CD8-positive, alpha-beta T cell (primary cell): ENCODE measurements at regions of chr20 and their contacts with region 1.

Region 1: DNA sequence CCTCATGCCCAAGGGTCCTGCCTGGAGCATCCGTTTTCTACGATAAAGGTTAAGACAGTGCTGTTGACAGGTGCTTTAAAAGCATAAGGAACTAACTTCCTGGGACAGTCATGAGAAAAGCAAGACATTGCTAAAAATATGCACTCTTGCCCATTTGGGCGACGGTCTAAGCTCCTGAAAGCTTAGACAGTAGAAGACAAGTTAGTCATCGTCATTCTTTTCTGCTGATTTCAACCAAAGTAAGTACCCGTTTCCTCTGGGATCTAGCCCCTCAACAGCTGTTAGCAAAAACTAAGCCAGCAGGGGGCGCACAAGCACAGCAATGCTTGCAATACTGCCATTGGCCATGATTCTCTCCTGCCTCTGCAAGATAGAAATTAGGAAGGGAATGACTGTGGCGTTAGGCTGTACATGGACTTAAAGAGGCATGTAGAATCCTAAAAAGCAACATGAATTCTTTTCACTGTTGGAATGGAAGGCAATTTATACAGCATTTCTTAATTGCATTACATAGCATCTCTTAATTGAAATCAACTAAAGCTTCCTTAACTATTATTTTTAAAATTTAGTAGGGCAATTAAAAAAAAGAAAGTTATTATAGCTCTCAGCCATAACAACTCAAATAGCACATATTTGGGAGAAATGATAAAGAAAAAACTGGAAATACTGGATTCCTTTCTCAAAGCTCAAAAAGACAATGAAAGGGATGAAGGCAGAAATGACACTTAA is 147.8 kb upstream of the RALGAPA2 start:
- DNase-seq: peak; percentile 64 to 90 (median 77)
- ATAC-seq: peak; percentile 58
- H3K4me3 ChIP-seq: no peak overlapping the region
- H3K4me3 Mint-ChIP-seq: no peak overlapping the region
- H3K27ac ChIP-seq: no peak overlapping the region
- H3K27ac Mint-ChIP-seq: no peak overlapping the region
- H3K4me1 ChIP-seq: no peaks in the 10 kb centered on the region
- H3K4me1 Mint-ChIP-seq: no peaks in the 10 kb centered on the region
- H3K27me3 ChIP-seq: peaks cover 0 to 3% of the 10 kb centered on the region in 2 experiments
- H3K27me3 Mint-ChIP-seq: peaks cover 22% of the 10 kb centered on the region
- CTCF ChIP-seq: peak; percentile 82

Region 2: DNA sequence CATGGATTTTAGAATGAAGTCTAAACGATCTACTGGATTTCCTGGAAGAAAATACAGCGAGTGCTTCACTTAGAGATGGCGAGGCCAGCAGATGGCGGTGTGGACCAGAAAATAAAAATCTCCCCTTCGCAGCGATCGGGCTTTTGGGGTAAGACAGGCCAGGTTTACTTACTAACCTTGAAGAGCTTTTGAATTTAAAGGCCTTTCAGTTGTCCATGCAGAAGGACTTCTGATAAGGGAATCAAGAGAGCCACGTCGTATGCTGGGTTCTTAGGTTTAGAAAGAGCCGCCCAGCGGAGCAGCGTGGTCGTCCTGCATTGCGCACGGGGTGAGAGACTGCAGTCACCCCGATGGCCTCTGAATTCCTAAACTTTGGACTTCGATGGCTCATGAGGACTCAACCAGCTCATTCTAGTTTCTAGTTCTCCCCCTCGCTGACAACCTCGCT is 22.6 kb before region 1 on chr20:
- CTCF ChIA-PET with region 1: interaction called, 17 read pairs
- POLR2A ChIA-PET with region 1: no interaction called
- intact Hi-C with region 1: no loop called
- DNase-seq: peak in 4 of 9 experiments; percentile 17 to 28 (median 19)
- ATAC-seq: no peak
- H3K4me3 ChIP-seq: no peak overlapping the region
- H3K4me3 Mint-ChIP-seq: no peak overlapping the region
- H3K27ac ChIP-seq: no peak overlapping the region
- H3K27ac Mint-ChIP-seq: no peak overlapping the region
- H3K4me1 ChIP-seq: no peaks in the 10 kb centered on the region
- H3K4me1 Mint-ChIP-seq: peaks cover 3% of the 10 kb centered on the region
- H3K27me3 ChIP-seq: no peaks in the 10 kb centered on the region
- H3K27me3 Mint-ChIP-seq: peaks cover 16% of the 10 kb centered on the region
- CTCF ChIP-seq: peak; percentile 31

Region 3: DNA sequence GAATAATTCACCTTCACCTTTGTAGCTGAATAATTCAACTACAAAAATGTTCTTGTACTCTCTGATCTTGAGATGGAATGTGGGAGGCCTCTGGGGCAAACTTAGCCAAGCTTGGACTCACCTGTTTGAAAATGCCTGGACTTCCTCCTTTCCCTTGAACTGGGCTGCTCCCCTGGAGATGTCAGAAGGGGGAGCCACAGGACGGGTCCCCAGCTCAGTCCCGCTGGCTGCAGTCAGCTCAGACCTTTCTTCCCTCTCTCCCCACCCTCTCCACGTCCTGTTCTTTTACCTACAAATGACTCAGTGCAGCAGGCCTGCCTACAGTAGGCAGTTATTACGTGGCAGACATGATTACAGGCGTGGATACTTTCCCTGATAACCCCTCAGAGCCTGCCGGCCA is 16.3 kb before region 1 on chr20:
- CTCF ChIA-PET with region 1: interaction called, 17 read pairs
- POLR2A ChIA-PET with region 1: no interaction called
- intact Hi-C with region 1: no loop called
- DNase-seq: no peak
- ATAC-seq: no peak
- H3K4me3 ChIP-seq: no peak overlapping the region
- H3K4me3 Mint-ChIP-seq: no peak overlapping the region
- H3K27ac ChIP-seq: no peak overlapping the region
- H3K27ac Mint-ChIP-seq: no peak overlapping the region
- H3K4me1 ChIP-seq: no peaks in the 10 kb centered on the region
- H3K4me1 Mint-ChIP-seq: no peaks in the 10 kb centered on the region
- H3K27me3 ChIP-seq: no peaks in the 10 kb centered on the region
- H3K27me3 Mint-ChIP-seq: peaks cover 7% of the 10 kb centered on the region
- CTCF ChIP-seq: no peak

Region 4: GRCh38 chr20:20849161-20849560 is 11.1 kb before region 1 on chr20:
- CTCF ChIA-PET with region 1: interaction called, 17 read pairs
- POLR2A ChIA-PET with region 1: no interaction called
- intact Hi-C with region 1: no loop called
- DNase-seq: no peak
- ATAC-seq: no peak
- H3K4me3 ChIP-seq: no peak overlapping the region
- H3K4me3 Mint-ChIP-seq: no peak overlapping the region
- H3K27ac ChIP-seq: no peak overlapping the region
- H3K27ac Mint-ChIP-seq: no peak overlapping the region
- H3K4me1 ChIP-seq: no peaks in the 10 kb centered on the region
- H3K4me1 Mint-ChIP-seq: no peaks in the 10 kb centered on the region
- H3K27me3 ChIP-seq: no peaks in the 10 kb centered on the region
- H3K27me3 Mint-ChIP-seq: peaks cover 9% of the 10 kb centered on the region
- CTCF ChIP-seq: no peak

Region 5: DNA sequence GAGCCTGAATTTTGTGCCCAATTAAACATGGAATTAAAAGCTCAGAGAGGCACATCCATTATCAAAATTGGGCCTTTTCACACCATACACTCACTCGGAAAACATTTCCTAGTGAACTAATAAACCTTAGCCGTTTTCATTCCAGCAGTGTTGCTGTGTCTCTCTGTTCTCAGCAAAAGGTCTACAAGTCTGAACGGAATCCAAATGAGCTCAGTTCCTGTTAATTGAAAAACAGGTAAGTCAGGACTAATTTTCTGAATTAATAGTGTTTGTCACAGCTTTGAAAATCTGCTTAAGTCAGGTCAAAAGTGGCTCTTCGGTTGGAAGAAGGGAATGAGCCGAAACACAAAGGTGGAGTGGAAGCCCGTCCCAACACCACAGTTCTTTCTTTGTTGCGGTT is 15.5 kb after region 1 on chr20:
- CTCF ChIA-PET with region 1: interaction called, 18 read pairs
- POLR2A ChIA-PET with region 1: no interaction called
- intact Hi-C with region 1: no loop called
- DNase-seq: no peak
- ATAC-seq: no peak
- H3K4me3 ChIP-seq: no peak overlapping the region
- H3K4me3 Mint-ChIP-seq: no peak overlapping the region
- H3K27ac ChIP-seq: no peak overlapping the region
- H3K27ac Mint-ChIP-seq: no peak overlapping the region
- H3K4me1 ChIP-seq: no peaks in the 10 kb centered on the region
- H3K4me1 Mint-ChIP-seq: no peaks in the 10 kb centered on the region
- H3K27me3 ChIP-seq: peaks cover 0 to 7% of the 10 kb centered on the region in 2 experiments
- H3K27me3 Mint-ChIP-seq: peaks cover 17% of the 10 kb centered on the region
- CTCF ChIP-seq: no peak